GM10248 (cell line): ENCODE measurements at regions of chr3 and their contacts with region 1.

Region 1: DNA sequence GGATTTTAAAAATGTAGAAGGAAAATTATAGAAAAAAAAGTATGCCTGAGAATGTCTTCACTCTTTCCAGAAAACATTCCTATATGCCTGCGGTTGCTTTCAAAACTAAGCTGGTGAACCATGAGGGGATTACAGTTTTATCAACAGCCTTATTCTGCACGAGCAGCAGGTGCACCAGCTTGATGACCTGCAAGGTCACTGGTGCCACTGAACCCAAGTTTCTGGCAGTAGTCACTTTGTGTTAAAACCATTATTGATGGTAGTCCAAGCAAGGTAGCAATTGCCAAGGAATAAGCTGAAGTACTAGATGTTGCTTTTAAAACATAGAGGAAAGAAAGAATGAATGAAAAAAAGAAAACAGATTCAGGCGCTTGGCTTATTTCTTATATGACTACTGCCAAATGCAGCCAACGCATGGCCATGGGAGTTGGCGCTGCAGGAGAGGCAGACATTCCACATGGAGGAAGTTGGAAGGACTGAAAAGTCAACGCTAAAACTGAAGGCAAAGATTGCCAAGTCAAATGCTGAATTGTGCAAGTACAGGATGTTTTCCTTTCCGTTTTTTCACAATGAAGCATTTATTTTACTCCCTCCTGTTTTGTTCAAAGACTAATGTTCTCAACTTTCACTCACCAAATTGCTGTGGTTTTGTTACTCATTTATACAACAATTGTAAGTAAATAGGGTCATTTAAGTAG is 601.4 kb downstream of the CADM2 start:
- DNase-seq: no peak
- CTCF ChIP-seq: no peak

Region 2: GRCh38 chr3:85397434-85397833 is 162.8 kb before region 1 on chr3:
- CTCF ChIA-PET with region 1: no interaction called
- POLR2A ChIA-PET with region 1: no interaction called
- DNase-seq: no peak
- CTCF ChIP-seq: no peak

Region 3: DNA sequence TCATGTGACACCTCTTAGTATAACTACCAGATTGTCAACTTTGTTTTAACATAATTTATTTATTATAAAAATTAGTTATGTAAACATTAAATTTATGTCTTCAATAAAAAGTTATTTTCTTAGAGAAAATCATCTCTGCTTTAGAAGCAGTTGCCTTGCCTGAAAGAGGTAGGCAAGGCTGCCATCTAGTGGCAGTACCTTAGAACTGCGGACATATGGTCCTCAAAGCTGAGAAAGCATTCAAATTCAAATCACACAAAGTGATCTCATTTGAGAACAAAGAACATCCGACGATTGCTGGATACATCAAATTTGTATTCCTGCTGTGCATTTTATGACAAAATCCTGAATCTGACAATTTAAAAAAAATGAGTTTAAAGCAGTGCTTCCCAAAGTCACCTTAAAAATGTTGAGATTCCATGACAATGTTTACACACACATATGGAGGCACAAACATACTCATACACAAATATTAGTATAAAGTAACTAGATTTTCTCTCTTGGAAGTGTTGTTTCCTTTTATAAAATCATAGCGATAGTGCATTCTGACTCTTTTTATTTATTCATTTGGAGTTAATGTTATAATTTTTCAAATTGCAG is 16.0 kb after region 1 on chr3:
- CTCF ChIA-PET with region 1: interaction called, 53 read pairs
- POLR2A ChIA-PET with region 1: no interaction called
- DNase-seq: peak; percentile 37
- CTCF ChIP-seq: peak; percentile 84

Region 4: GRCh38 chr3:85652360-85652759 is 92.1 kb after region 1 on chr3:
- CTCF ChIA-PET with region 1: no interaction called
- POLR2A ChIA-PET with region 1: no interaction called
- DNase-seq: no peak
- CTCF ChIP-seq: no peak